ENCODE measurements at regions of chr6 and their contacts with region 1.

Region 1: GRCh38 chr6:73236147-73236750 is 11.0 kb upstream of the KHDC1L start:
- DNase-seq: peak; percentile 89
- H3K4me3 ChIP-seq: no peak overlapping the region
- H3K27ac ChIP-seq: peak overlapping the region; percentile 68
- H3K4me1 ChIP-seq: peaks cover 15% of the 10 kb centered on the region
- H3K27me3 ChIP-seq: no peaks in the 10 kb centered on the region
- CTCF ChIP-seq: no peak

Region 2: DNA sequence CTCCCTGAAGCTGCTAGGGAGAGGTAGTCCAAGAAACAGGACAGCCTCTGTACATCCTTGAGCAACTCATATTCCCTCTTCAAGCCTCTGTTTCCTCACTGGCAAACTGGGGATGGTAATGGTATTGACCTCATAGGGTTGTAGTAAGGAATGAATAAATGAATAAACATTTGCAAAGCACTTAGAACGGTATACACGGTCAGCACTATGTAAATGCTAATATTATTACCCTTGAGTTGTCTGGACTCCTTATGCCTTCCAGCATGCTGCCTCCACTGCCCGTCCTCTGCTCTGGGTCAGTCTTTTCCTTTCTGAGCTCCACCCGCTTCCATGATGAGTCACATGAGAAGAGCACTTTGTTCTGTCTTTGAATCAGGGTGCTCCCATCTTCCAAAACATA is 61.6 kb before region 1 on chr6:
- CTCF ChIA-PET with region 1: interaction called, 10 read pairs
- dilution Hi-C with region 1: no loop called
- in situ Hi-C with region 1: no loop called
- intact Hi-C with region 1: no loop called
- DNase-seq: no peak
- H3K4me3 ChIP-seq: no peak overlapping the region
- H3K27ac ChIP-seq: no peak overlapping the region
- H3K4me1 ChIP-seq: peaks cover under 1% of the 10 kb centered on the region
- H3K27me3 ChIP-seq: no peaks in the 10 kb centered on the region
- CTCF ChIP-seq: no peak

Region 3: DNA sequence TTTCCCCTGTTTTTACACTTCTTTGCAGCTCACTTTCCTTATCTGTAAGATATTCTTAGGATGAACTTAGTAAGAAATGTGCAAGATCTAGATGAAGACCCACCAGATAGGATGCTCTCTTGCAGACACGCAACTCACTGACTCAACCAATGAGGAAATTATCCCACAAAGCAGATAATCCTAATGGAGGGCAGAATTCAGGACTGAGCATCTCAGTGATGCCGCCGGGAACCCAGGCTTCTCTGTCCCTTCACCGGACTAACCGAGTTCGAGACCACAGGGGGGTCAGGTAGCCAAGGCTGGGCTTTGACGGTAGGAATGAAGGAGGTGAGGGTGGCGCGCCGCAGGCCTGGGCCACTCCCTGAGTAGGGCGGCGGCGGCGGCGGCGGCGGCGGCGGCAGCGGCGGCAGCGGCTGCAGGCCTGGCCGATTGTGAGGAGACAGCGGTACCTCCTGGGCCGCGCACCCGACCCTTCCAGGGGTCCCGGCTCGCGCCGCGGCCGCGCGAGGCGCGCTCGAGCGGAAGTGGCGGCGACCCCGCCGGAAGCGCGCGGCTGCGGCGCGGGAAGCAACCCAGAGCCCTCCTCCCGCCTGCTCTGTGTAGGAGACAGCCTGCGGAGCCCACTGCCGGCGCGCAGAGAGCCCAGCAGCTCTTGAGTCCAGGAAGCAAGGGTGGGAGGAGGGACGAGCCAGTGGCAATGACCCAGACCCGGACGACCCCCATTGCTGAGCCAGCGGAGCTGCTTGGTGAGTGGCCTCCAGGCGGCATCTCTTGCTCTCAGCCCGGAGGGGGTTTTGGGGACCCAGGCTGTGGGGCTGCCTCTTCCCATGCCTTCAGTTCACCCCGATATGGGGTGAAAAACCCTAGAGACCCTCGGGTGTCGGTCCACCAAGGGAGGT is 26.7 kb after region 1 on chr6 and contains the start of gene KHDC1:
- CTCF ChIA-PET with region 1: no interaction called
- dilution Hi-C with region 1: no loop called
- in situ Hi-C with region 1: no loop called
- intact Hi-C with region 1: loop called (anchors 1 kb)
- DNase-seq: peak; percentile 23
- H3K4me3 ChIP-seq: peak within 1 kb of the TSS; percentile 57 to 79 (median 70)
- H3K27ac ChIP-seq: peak within 1 kb of the TSS; percentile 52
- H3K4me1 ChIP-seq: peaks cover 37% of the 10 kb centered on the region
- H3K27me3 ChIP-seq: no peaks in the 10 kb centered on the region
- CTCF ChIP-seq: peak in 1 of 2 donors; percentile 7
- total RNA-seq, gene KHDC1: 0.71 to 1.2 TPM

Region 4: GRCh38 chr6:73309769-73310502 is 73.7 kb after region 1 on chr6:
- CTCF ChIA-PET with region 1: no interaction called
- dilution Hi-C with region 1: no loop called
- in situ Hi-C with region 1: no loop called
- intact Hi-C with region 1: no loop called
- DNase-seq: peak; percentile 63
- H3K4me3 ChIP-seq: peak overlapping the region; percentile 66 to 71 (median 66)
- H3K27ac ChIP-seq: peak overlapping the region; percentile 40
- H3K4me1 ChIP-seq: peaks cover 12% of the 10 kb centered on the region
- H3K27me3 ChIP-seq: peaks cover 5% of the 10 kb centered on the region
- CTCF ChIP-seq: peak; percentile 10 to 61

Measured in mammary epithelial cell (primary cell).